ENCODE measurements at regions of chr1 and their contacts with region 1.

Region 1: GRCh38 chr1:111222308-111223125 is 5.0 kb upstream of the CHI3L2 start:
- DNase-seq: peak; percentile 69
- H3K4me3 Mint-ChIP-seq: peak overlapping the region; percentile 78
- H3K27ac Mint-ChIP-seq: peak overlapping the region; percentile 98
- H3K4me1 Mint-ChIP-seq: peaks cover 93% of the 10 kb centered on the region
- H3K27me3 Mint-ChIP-seq: no peaks in the 10 kb centered on the region

Region 2: DNA sequence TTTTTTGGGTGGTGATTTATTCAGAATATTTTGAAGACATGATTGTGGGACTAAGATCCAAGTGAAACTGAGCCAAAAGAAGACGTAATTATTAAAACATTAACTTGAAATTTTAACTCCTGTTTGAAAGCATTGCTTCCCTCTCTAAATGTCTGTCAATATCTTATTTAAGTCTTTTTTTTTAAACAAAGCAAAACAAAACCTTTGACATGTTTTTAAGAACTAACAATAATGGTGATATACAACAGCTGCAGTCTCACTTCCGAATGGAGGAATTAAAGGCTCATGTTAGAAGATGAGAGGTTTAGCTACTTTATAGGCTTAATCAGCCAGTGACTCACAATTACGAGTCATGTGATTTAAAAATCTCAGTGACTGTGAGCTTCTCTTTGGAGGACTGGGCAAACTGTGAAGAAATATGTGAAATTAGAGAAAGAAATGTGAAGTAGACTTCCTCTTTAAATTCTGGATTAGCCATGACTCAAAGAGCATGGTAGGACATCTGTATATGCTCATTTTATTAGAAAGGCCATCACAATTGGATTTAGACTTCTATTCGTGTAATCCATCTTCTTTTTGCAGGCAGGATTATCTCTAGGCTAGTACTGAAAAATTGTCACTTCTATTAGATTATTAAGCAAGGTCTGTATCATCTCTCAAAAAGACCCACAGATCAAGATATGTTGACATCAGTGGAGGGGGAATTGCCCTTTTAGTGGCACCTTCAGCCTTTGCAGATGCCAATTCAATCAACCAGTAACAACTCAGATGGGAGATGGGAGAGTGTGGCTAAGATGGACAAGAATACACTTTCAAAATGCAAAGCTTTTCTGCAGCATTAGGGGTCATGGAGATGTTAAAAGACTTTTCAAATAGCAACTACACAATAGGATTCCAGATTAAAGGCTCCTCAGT is 576.4 kb before region 1 on chr1:
- intact Hi-C with region 1: loop called (anchors 1 kb)
- DNase-seq: no peak
- H3K4me3 Mint-ChIP-seq: peak overlapping the region; percentile 56
- H3K27ac Mint-ChIP-seq: peak overlapping the region; percentile 81
- H3K4me1 Mint-ChIP-seq: peaks cover 53% of the 10 kb centered on the region
- H3K27me3 Mint-ChIP-seq: no peaks in the 10 kb centered on the region

Region 3: GRCh38 chr1:111139956-111140679 is 82.4 kb before region 1 on chr1 and contains the starts of genes CEPT1 and DRAM2:
- intact Hi-C with region 1: loop called (anchors 2 kb)
- DNase-seq: peak; percentile 89
- H3K4me3 Mint-ChIP-seq: peak within 1 kb of the TSS; percentile 100
- H3K27ac Mint-ChIP-seq: peak within 1 kb of the TSS; percentile 100
- H3K4me1 Mint-ChIP-seq: peaks cover 40% of the 10 kb centered on the region
- H3K27me3 Mint-ChIP-seq: no peaks in the 10 kb centered on the region
- total RNA-seq, gene CEPT1: 32.5 and 37.3 TPM in 2 replicates
- total RNA-seq, gene DRAM2: 24.0 and 26.6 TPM in 2 replicates

Region 4: GRCh38 chr1:111275079-111275478 is 52.6 kb after region 1 on chr1:
- intact Hi-C with region 1: loop called (anchors 1 kb)
- DNase-seq: peak; percentile 8
- H3K4me3 Mint-ChIP-seq: no peak overlapping the region
- H3K27ac Mint-ChIP-seq: peak overlapping the region; percentile 37
- H3K4me1 Mint-ChIP-seq: peaks cover 26% of the 10 kb centered on the region
- H3K27me3 Mint-ChIP-seq: peaks cover 20% of the 10 kb centered on the region

Region 5: DNA sequence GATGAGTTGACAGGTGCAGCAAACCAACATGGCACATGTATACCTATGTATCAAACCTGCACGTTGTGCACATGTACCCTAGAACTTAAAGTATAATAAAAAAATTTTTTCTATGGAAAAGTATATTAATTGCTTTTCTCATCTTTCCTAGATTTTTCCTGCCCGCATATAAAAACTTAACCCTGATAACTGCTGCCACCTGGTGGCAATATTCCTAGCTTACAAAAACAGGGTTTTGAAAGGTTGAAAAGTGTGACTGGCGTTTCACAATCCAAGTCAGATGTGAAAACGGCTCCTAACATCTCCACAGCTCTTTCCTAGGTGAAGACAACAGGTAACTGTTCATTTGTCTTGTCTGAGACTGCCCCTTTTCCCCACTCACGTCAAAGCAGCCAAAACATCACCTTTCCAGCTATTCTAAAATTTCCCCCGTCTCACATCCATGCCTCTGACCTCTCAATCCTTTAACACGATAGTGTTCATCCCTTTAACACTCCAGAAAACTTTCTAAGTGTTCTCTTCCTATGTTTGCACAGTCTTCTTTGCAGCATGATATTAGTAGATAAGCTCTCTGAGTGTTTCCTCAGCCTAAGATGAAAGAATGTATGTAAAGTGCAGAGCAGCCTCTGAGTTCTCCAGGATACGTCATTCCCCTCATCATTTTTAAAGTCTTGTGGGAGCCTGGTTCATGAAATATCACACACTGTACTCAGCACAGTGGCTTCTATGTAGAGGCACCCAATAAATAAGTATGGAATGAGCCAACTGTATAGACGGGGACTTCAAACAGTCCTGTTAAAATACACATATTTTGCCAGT is 177.5 kb after region 1 on chr1:
- intact Hi-C with region 1: loop called (anchors 1 kb)
- DNase-seq: no peak
- H3K4me3 Mint-ChIP-seq: no peak overlapping the region
- H3K27ac Mint-ChIP-seq: no peak overlapping the region
- H3K4me1 Mint-ChIP-seq: peaks cover 19% of the 10 kb centered on the region
- H3K27me3 Mint-ChIP-seq: peaks cover 41% of the 10 kb centered on the region

Region 6: GRCh38 chr1:111481387-111482221 is 259.1 kb after region 1 on chr1:
- intact Hi-C with region 1: loop called (anchors 10 kb)
- DNase-seq: peak; percentile 31
- H3K4me3 Mint-ChIP-seq: no peak overlapping the region
- H3K27ac Mint-ChIP-seq: no peak overlapping the region
- H3K4me1 Mint-ChIP-seq: peaks cover 20% of the 10 kb centered on the region
- H3K27me3 Mint-ChIP-seq: peaks cover 47% of the 10 kb centered on the region

Region 7: GRCh38 chr1:111733183-111733991 is 510.9 kb after region 1 on chr1:
- intact Hi-C with region 1: no loop called
- DNase-seq: no peak
- H3K4me3 Mint-ChIP-seq: no peak overlapping the region
- H3K27ac Mint-ChIP-seq: no peak overlapping the region
- H3K4me1 Mint-ChIP-seq: peaks cover 11% of the 10 kb centered on the region
- H3K27me3 Mint-ChIP-seq: peaks cover 11% of the 10 kb centered on the region